CD8-positive, alpha-beta T cell (primary cell): ENCODE measurements at regions of chr7 and their contacts with region 1.

Region 1: DNA sequence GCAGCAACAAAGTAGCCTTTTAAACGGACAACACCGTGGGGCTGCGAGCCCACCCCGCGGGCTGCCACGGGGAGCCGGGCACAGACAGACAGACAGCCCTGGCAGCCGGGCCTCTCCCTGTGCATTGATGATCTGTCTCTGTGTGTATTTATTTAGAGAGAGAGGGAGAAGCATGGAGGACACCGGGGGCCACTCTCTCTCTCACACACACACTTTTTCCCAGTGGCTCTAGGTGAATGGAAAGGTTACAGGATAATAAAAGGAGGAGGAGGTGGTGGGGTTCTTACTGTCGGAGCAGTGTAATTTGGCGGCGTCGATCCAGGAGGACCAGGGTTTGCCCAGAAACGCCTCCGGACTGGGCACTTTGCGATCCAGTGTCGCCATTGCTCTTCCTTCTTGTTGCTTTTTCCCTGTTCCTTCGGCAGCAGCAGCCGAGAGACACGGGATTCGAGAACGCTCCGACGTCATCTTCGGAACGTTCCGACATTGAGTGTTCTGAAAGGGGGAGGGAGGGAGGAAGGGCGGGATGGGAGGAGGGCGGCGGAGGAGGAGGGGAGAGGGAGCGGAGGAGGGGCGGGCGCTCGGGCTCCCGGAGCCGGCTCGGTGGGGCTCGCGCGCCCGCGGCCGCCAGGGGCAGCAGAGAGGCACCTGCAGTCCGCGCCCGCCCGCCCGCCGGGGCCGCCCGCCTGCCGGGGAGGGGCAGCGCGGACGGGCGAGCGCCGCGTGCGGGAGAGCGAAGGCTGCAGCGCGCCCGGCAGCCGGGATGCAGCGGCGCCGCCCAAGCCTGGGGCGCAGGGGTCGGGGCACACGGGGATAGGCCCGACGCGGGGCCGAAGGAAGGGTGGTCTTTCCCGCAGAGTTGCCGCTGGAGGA is at the start of gene ATXN7L1:
- DNase-seq: peak; percentile 81 to 94 (median 89)
- ATAC-seq: peak; percentile 94
- H3K4me3 ChIP-seq: peak within 1 kb of the TSS; percentile 76 to 98
- H3K4me3 Mint-ChIP-seq: peak within 1 kb of the TSS; percentile 97
- H3K27ac ChIP-seq: peak within 1 kb of the TSS; percentile 53 to 78
- H3K27ac Mint-ChIP-seq: peak within 1 kb of the TSS; percentile 96
- H3K4me1 ChIP-seq: peaks cover 37% of the 10 kb centered on the region
- H3K4me1 Mint-ChIP-seq: peaks cover 61% of the 10 kb centered on the region
- H3K27me3 ChIP-seq: no peaks in the 10 kb centered on the region
- H3K27me3 Mint-ChIP-seq: no peaks in the 10 kb centered on the region
- CTCF ChIP-seq: peak; percentile 29
- total RNA-seq, gene ATXN7L1: 17.0 to 18.5 TPM

Region 2: DNA sequence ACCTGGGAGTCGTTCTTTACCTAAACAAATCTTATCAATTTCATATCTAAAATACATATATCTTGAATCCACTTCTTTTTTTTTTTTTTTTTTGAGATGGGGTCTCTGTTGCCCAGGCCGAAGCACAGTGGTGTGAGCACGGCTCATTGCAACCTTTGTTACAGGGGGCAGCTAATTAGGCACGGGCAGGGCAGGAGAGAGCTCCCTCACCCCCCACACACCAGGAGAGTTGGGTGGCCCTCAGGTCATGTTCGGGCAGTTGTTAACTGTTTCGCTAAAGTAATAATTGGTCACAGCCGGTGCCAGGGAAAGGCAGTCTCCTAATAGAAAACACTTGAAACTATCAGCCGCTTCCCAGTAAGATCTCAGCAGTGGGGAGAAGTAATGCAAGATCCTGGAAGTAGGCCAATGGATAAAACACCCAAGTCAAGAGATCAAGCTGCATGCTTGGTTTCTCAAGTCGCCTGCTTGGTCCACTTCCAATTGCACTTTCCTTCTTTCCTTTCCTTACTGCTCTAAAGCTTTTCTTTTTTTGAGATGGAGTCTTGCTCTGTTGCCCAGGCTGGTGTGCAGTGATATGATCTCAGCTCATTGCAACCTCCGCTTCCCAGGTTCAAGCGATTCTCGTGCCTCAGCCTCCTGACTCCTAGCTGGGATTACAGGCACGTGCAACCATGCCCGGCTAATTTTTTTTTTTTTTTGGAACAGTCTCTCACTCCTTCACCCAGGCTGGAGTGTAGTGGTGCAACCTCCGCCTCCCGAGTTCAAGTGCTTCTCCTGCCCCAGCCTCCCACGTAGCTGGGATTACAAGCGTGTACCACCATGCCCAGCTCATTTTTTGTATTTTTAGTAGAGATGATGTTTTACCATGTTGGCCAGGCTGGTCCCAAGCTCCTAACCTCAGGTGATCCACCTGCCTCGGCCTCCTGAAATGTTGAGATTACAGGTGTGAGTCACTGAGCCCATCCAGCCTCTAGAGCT is 273.7 kb before region 1 on chr7:
- CTCF ChIA-PET with region 1: no interaction called
- POLR2A ChIA-PET with region 1: no interaction called
- intact Hi-C with region 1: no loop called
- DNase-seq: no peak
- ATAC-seq: no peak
- H3K4me3 ChIP-seq: no peak overlapping the region
- H3K4me3 Mint-ChIP-seq: no peak overlapping the region
- H3K27ac ChIP-seq: no peak overlapping the region
- H3K27ac Mint-ChIP-seq: no peak overlapping the region
- H3K4me1 ChIP-seq: no peaks in the 10 kb centered on the region
- H3K4me1 Mint-ChIP-seq: no peaks in the 10 kb centered on the region
- H3K27me3 ChIP-seq: no peaks in the 10 kb centered on the region
- H3K27me3 Mint-ChIP-seq: peaks cover 8% of the 10 kb centered on the region
- CTCF ChIP-seq: no peak

Region 3: GRCh38 chr7:105652359-105652993 is 223.9 kb before region 1 on chr7:
- CTCF ChIA-PET with region 1: interaction called, 8 read pairs
- POLR2A ChIA-PET with region 1: no interaction called
- intact Hi-C with region 1: loop called in 1 of 2 experiments (anchors 2 kb)
- DNase-seq: peak; percentile 34 to 73 (median 70)
- ATAC-seq: peak; percentile 92
- H3K4me3 ChIP-seq: no peak overlapping the region
- H3K4me3 Mint-ChIP-seq: no peak overlapping the region
- H3K27ac ChIP-seq: no peak overlapping the region
- H3K27ac Mint-ChIP-seq: no peak overlapping the region
- H3K4me1 ChIP-seq: no peaks in the 10 kb centered on the region
- H3K4me1 Mint-ChIP-seq: peaks cover 5% of the 10 kb centered on the region
- H3K27me3 ChIP-seq: no peaks in the 10 kb centered on the region
- H3K27me3 Mint-ChIP-seq: no peaks in the 10 kb centered on the region
- CTCF ChIP-seq: peak; percentile 70

Region 4: DNA sequence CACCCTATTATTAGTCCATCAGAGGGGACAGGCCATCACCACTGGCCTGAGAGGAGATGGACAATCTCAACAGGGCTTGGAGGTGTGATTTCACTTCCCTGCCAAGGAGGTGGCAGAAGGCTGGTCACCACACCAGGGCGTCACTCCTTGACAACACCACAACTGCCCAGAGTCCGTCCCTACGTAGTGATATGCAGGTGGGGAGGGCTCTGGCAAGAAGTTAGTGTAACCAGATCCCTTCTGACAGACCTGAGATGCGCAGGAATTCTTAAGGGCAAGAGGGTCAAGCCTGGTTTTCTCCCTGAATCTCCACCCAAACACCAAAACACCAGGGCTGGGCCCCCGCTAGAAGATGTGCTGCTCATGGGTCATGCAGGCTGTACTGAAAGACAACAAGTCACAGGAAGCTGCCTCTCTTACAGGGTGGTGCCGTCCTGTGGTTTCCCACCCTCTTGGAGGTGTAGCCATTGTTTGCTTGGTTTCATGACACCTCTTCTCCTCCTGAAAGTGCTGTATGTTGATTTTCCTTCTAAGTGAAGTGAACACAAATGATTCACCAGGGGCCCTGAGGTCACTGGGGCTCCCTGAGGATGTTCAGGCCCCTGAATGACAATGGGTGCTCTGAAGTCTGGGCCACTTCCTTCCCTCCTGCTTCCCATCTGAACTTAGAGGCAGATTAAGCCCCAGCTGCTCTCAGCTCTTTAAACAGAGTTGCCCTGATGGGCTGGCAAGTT is 27.0 kb before region 1 on chr7:
- CTCF ChIA-PET with region 1: interaction called, 14 read pairs
- POLR2A ChIA-PET with region 1: interaction called, 3 read pairs
- intact Hi-C with region 1: loop called (anchors 1 to 2 kb)
- DNase-seq: peak; percentile 30 to 91 (median 71)
- ATAC-seq: peak; percentile 86
- H3K4me3 ChIP-seq: peak overlapping the region in 1 of 2 experiments; percentile 18
- H3K4me3 Mint-ChIP-seq: peak overlapping the region; percentile 52
- H3K27ac ChIP-seq: peak overlapping the region; percentile 44 to 72
- H3K27ac Mint-ChIP-seq: peak overlapping the region; percentile 90
- H3K4me1 ChIP-seq: peaks cover 52% of the 10 kb centered on the region
- H3K4me1 Mint-ChIP-seq: peaks cover 74% of the 10 kb centered on the region
- H3K27me3 ChIP-seq: no peaks in the 10 kb centered on the region
- H3K27me3 Mint-ChIP-seq: no peaks in the 10 kb centered on the region
- CTCF ChIP-seq: no peak

Region 5: DNA sequence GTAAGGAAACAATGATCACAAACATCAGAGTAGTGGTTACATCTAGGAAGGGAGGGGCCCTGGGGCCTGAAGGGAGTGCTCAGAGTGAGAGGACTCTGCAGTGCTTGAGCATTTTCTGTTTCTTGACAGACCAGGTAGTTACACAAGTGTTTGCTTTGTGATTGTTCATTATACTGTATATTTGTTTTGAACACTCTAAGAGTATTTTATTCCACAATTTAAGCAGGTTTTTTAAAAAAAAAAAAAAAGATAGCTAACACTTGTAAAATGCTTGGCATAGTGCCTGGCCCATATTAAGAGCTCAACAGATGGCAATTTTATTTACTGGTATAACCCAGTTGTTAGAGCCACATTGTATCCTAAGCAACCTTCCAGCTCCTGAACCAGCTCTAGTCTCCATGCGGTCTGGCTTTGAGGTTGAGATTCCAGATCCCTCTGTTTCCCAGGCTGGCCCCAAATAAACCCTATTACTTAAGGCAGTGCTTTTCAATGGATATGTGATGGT is 20.1 kb after region 1 on chr7:
- CTCF ChIA-PET with region 1: interaction called, 5 read pairs
- POLR2A ChIA-PET with region 1: no interaction called
- intact Hi-C with region 1: loop called in 1 of 2 experiments (anchors 2 kb)
- DNase-seq: peak in 1 of 9 experiments; percentile 12
- ATAC-seq: peak; percentile 68
- H3K4me3 ChIP-seq: no peak overlapping the region
- H3K4me3 Mint-ChIP-seq: no peak overlapping the region
- H3K27ac ChIP-seq: no peak overlapping the region
- H3K27ac Mint-ChIP-seq: peak overlapping the region; percentile 42
- H3K4me1 ChIP-seq: peaks cover 7% of the 10 kb centered on the region
- H3K4me1 Mint-ChIP-seq: peaks cover 30% of the 10 kb centered on the region
- H3K27me3 ChIP-seq: no peaks in the 10 kb centered on the region
- H3K27me3 Mint-ChIP-seq: no peaks in the 10 kb centered on the region
- CTCF ChIP-seq: no peak

Region 6: GRCh38 chr7:106022193-106022821 is 146.0 kb after region 1 on chr7:
- CTCF ChIA-PET with region 1: interaction called, 4 read pairs
- POLR2A ChIA-PET with region 1: interaction called, 4 read pairs
- intact Hi-C with region 1: loop called (anchors 5 kb)
- DNase-seq: peak; percentile 62 to 96 (median 84)
- ATAC-seq: peak; percentile 85
- H3K4me3 ChIP-seq: peak overlapping the region; percentile 11 to 20
- H3K4me3 Mint-ChIP-seq: peak overlapping the region; percentile 59
- H3K27ac ChIP-seq: peak overlapping the region; percentile 80 to 82
- H3K27ac Mint-ChIP-seq: peak overlapping the region; percentile 95
- H3K4me1 ChIP-seq: peaks cover 48% of the 10 kb centered on the region
- H3K4me1 Mint-ChIP-seq: peaks cover 68% of the 10 kb centered on the region
- H3K27me3 ChIP-seq: peaks cover 0 to 3% of the 10 kb centered on the region in 2 experiments
- H3K27me3 Mint-ChIP-seq: no peaks in the 10 kb centered on the region
- CTCF ChIP-seq: no peak

Region 7: DNA sequence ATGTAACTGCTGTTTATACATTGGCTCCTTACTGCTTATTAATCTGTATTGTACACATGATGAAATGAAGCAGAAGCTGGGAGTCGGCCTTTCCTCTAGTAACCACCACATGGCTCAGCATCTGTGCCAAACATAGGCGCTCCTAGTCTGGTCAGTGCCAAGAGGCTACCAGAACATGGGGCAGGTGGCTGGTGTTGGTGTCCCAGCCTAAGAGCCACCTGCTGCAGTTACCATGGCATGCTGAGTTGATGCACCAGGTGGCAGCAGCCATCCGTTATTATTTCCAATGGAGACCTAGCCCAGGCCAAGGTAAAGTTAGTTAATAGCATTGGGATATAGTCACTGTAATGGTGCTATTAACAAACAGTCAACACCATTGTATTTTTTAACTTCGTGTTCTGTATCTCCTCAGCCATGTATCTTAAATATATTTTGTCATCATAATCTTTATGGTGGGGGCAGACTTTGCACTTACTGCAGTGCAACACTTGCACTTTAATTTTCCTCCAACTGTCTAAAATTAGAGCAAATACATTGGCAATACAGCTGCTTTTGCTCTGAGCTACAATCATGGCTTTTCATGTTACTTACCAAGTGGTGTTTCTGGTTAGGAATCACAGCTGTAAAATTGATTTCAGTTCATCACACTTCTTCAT is 1325.6 kb after region 1 on chr7:
- CTCF ChIA-PET with region 1: no interaction called
- POLR2A ChIA-PET with region 1: no interaction called
- intact Hi-C with region 1: no loop called
- DNase-seq: peak in 4 of 9 experiments; percentile 16 to 48 (median 37)
- ATAC-seq: peak; percentile 57
- H3K4me3 ChIP-seq: no peak overlapping the region
- H3K4me3 Mint-ChIP-seq: no peak overlapping the region
- H3K27ac ChIP-seq: no peak overlapping the region
- H3K27ac Mint-ChIP-seq: no peak overlapping the region
- H3K4me1 ChIP-seq: no peaks in the 10 kb centered on the region
- H3K4me1 Mint-ChIP-seq: no peaks in the 10 kb centered on the region
- H3K27me3 ChIP-seq: no peaks in the 10 kb centered on the region
- H3K27me3 Mint-ChIP-seq: no peaks in the 10 kb centered on the region
- CTCF ChIP-seq: peak; percentile 37